Naive thymus-derived CD4-positive, alpha-beta T cell (primary cell): ENCODE measurements at regions of chr2 and their contacts with region 1.

Region 1: GRCh38 chr2:147663153-147663961 is 181.5 kb upstream of the ACVR2A start:
- DNase-seq: peak in 7 of 9 donors; percentile 10 to 75 (median 58)
- ATAC-seq: peak; percentile 91
- H3K4me3 ChIP-seq: peak overlapping the region; percentile 48
- H3K4me3 Mint-ChIP-seq: peak overlapping the region; percentile 61 to 87 (median 82)
- H3K27ac ChIP-seq: peak overlapping the region; percentile 68
- H3K27ac Mint-ChIP-seq: peak overlapping the region; percentile 87 to 100 (median 93)
- H3K4me1 ChIP-seq: peaks cover 7 to 23% of the 10 kb centered on the region in 2 donors
- H3K4me1 Mint-ChIP-seq: peaks cover 17 to 59% (median 46%) of the 10 kb centered on the region in 7 donors
- H3K27me3 ChIP-seq: no peaks in the 10 kb centered on the region
- H3K27me3 Mint-ChIP-seq: no peaks in the 10 kb centered on the region

Region 2: GRCh38 chr2:147297820-147298219 is 365.5 kb before region 1 on chr2:
- CTCF ChIA-PET with region 1: no interaction called
- POLR2A ChIA-PET with region 1: no interaction called
- intact Hi-C with region 1: loop called (anchors 1 to 10 kb)
- DNase-seq: peak in 7 of 9 donors; percentile 13 to 63 (median 32)
- ATAC-seq: peak; percentile 76
- H3K4me3 ChIP-seq: no peak overlapping the region
- H3K4me3 Mint-ChIP-seq: peak overlapping the region in 8 of 10 donors; percentile 9 to 53 (median 38)
- H3K27ac ChIP-seq: no peak overlapping the region
- H3K27ac Mint-ChIP-seq: peak overlapping the region; percentile 53 to 94 (median 85)
- H3K4me1 ChIP-seq: peaks cover 18 to 26% of the 10 kb centered on the region in 2 donors
- H3K4me1 Mint-ChIP-seq: peaks cover 10 to 60% (median 29%) of the 10 kb centered on the region in 7 donors
- H3K27me3 ChIP-seq: no peaks in the 10 kb centered on the region
- H3K27me3 Mint-ChIP-seq: peaks cover 0 to 17% (median 0%) of the 10 kb centered on the region in 5 donors

Region 3: GRCh38 chr2:147623328-147623727 is 40.0 kb before region 1 on chr2:
- CTCF ChIA-PET with region 1: no interaction called
- POLR2A ChIA-PET with region 1: interaction called, 3 read pairs
- intact Hi-C with region 1: loop called (anchors 1 to 2 kb)
- DNase-seq: peak in 7 of 9 donors; percentile 12 to 64 (median 41)
- ATAC-seq: peak; percentile 88
- H3K4me3 ChIP-seq: no peak overlapping the region
- H3K4me3 Mint-ChIP-seq: peak overlapping the region; percentile 1 to 63 (median 37)
- H3K27ac ChIP-seq: no peak overlapping the region
- H3K27ac Mint-ChIP-seq: peak overlapping the region; percentile 4 to 76 (median 36)
- H3K4me1 ChIP-seq: peaks cover 0 to 23% of the 10 kb centered on the region in 2 donors
- H3K4me1 Mint-ChIP-seq: peaks cover 12 to 36% (median 25%) of the 10 kb centered on the region in 7 donors
- H3K27me3 ChIP-seq: no peaks in the 10 kb centered on the region
- H3K27me3 Mint-ChIP-seq: no peaks in the 10 kb centered on the region

Region 4: GRCh38 chr2:147632198-147632597 is 31.2 kb before region 1 on chr2:
- CTCF ChIA-PET with region 1: interaction called, 3 read pairs
- POLR2A ChIA-PET with region 1: interaction called, 16 read pairs
- intact Hi-C with region 1: loop called (anchors 2 kb)
- DNase-seq: no peak
- ATAC-seq: no peak
- H3K4me3 ChIP-seq: no peak overlapping the region
- H3K4me3 Mint-ChIP-seq: peak overlapping the region in 2 of 10 donors; percentile 15 to 54
- H3K27ac ChIP-seq: no peak overlapping the region
- H3K27ac Mint-ChIP-seq: peak overlapping the region in 4 of 9 donors; percentile 34 to 77 (median 64)
- H3K4me1 ChIP-seq: peaks cover 5 to 22% of the 10 kb centered on the region in 2 donors
- H3K4me1 Mint-ChIP-seq: peaks cover 0 to 54% (median 10%) of the 10 kb centered on the region in 7 donors
- H3K27me3 ChIP-seq: no peaks in the 10 kb centered on the region
- H3K27me3 Mint-ChIP-seq: no peaks in the 10 kb centered on the region

Region 5: GRCh38 chr2:148048475-148049221 is 385.3 kb after region 1 on chr2:
- CTCF ChIA-PET with region 1: no interaction called
- POLR2A ChIA-PET with region 1: no interaction called
- intact Hi-C with region 1: no loop called
- DNase-seq: no peak
- ATAC-seq: no peak
- H3K4me3 ChIP-seq: no peak overlapping the region
- H3K4me3 Mint-ChIP-seq: no peak overlapping the region
- H3K27ac ChIP-seq: no peak overlapping the region
- H3K27ac Mint-ChIP-seq: peak overlapping the region in 3 of 9 donors; percentile 14 to 35 (median 22)
- H3K4me1 ChIP-seq: peaks cover 0 to 4% of the 10 kb centered on the region in 2 donors
- H3K4me1 Mint-ChIP-seq: peaks cover 25 to 65% (median 44%) of the 10 kb centered on the region in 7 donors
- H3K27me3 ChIP-seq: no peaks in the 10 kb centered on the region
- H3K27me3 Mint-ChIP-seq: no peaks in the 10 kb centered on the region